Activated CD8-positive, alpha-beta T cell treated with anti-CD3 and anti-CD28 coated beads, Interleukin-2, amount 10 ng/mL, durations not matched to agents 7 days and 5 days (primary cell): ENCODE measurements at regions of chr5 and their contacts with region 1.

Region 1: DNA sequence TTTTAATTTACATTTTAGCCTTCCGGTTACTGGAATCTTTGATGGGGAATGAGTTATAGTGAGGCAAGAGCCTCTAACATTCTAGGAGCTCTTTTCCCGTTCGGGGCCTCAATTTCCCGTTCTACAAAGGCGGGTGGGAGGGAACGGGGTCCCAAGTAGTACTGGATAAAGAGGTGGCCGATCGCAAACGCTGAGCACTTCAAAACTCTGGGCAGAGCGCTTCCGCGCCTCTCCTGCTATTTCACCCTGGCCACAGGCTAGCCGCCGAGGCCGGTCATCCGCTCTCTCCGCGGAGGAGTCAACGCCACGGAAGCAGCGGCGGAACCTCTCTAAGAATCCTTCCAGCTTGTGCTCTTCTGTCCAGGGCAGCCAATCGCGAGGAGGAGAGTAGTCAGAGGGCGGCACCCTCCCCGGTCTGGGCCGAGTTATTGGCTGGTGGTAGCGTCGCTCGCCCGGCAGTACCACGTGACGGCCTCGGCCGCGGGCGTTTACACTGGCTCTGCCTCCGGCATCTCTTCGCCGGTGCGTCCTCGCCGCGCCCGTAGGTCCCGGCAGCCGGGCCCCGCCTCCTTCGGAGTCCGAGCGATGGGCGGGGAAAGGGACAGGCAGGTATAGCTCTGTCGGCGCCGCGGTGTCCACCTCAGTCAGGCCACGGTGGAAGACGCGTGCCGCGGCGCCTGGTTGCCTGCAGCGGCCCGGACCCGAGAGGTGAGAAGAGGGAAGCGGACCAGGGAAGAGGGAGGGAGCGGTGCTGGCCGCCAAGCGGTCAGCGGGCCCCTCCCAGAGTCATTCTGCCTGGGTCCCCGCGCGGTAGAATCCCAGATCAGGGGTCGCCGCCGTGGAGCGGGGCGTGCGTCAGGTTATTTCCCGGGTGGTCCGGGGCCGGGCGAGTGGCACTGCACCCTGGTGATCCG is at the start of gene SLC26A2:
- DNase-seq: peak; percentile 97
- ATAC-seq: peak; percentile 100
- H3K4me3 Mint-ChIP-seq: peak within 1 kb of the TSS; percentile 85
- H3K27ac Mint-ChIP-seq: peak within 1 kb of the TSS; percentile 93
- H3K4me1 Mint-ChIP-seq: peaks cover 35% of the 10 kb centered on the region
- H3K27me3 Mint-ChIP-seq: no peaks in the 10 kb centered on the region
- total RNA-seq, gene SLC26A2: 7.6 to 8.0 TPM

Region 2: GRCh38 chr5:149834246-149834855 is 126.2 kb before region 1 on chr5:
- CTCF ChIA-PET with region 1: interaction called, 107 read pairs
- POLR2A ChIA-PET with region 1: interaction called, 3 read pairs
- DNase-seq: peak; percentile 73
- ATAC-seq: peak; percentile 48
- H3K4me3 Mint-ChIP-seq: no peak overlapping the region
- H3K27ac Mint-ChIP-seq: no peak overlapping the region
- H3K4me1 Mint-ChIP-seq: peaks cover 5% of the 10 kb centered on the region
- H3K27me3 Mint-ChIP-seq: no peaks in the 10 kb centered on the region

Region 3: DNA sequence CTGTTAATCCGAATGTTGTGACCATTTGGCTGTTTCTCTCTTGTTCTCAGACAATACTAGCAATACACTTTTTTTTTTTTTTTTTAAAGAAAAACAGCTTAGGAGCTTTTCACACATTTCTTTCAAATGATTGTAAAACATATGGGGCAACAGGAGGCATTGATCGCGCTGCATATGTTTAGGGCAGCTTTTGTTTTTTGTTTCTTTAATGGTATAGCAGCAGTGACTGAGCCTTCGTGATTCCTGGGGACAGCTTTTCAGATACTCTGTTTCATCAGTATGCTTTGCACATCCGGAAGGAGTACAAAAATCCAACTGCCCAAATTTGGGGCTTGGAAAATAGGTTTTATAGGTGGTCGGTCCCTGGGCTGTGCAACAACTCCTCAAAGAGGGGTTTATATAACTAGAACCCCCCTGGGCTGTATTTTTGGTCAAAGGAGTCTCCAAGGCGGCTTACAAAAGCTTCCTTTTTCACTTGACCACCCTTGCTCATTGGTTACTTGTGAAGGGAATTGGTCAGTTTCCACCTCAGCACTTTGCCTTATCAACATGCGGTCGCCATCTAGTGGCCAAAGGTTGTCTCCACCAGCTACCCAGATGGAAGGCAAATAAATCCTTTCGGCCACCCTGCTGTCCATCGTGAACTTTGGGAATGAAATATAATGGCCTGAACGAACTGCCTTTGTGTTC is 107.7 kb before region 1 on chr5:
- CTCF ChIA-PET with region 1: interaction called, 68 read pairs
- POLR2A ChIA-PET with region 1: no interaction called
- DNase-seq: peak; percentile 59
- ATAC-seq: peak; percentile 73
- H3K4me3 Mint-ChIP-seq: no peak overlapping the region
- H3K27ac Mint-ChIP-seq: no peak overlapping the region
- H3K4me1 Mint-ChIP-seq: no peaks in the 10 kb centered on the region
- H3K27me3 Mint-ChIP-seq: no peaks in the 10 kb centered on the region

Region 4: DNA sequence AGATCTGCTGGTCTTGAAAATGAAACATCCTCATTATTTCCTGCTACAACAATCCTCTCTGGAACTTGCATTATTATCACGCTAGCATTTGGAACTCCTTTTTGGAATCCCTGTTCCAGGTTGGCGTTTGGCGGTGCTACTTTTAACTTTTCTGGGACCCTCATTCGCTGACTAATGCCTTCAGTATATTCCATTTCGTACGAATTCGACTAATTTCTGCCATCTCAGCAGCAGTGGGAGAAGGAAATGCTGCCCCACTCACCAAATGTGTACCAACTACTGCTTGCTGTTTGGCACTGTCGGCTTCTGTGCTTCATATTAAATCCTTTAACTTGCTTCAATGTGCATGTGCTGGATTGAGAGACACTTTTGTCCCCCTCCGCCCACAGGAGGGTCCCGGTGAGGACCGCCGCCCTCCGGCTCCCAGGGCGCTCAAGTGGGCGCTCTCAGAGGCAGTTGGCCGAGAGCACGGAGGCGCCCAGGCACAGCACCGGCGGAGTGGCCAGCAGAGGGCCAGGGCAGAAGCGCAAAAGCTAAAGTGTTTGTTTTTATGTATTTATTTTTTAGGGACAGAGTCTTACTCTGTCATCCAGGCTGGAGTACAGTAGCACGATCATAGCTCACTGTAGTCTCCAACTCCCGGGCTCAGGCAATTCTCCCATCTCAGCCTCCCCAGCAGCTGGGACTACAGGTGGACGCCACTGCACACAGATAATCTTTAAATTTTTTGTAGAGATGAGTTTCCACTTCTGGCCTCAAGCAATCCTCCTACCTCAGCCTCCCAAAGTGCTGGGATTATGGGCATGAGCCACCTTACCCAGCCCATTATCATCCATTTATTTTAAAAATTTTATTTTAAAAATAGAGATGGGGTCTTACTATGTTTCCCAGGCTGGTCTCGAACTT is 27.8 kb before region 1 on chr5:
- CTCF ChIA-PET with region 1: interaction called, 12 read pairs
- POLR2A ChIA-PET with region 1: no interaction called
- DNase-seq: no peak
- ATAC-seq: no peak
- H3K4me3 Mint-ChIP-seq: no peak overlapping the region
- H3K27ac Mint-ChIP-seq: no peak overlapping the region
- H3K4me1 Mint-ChIP-seq: peaks cover 3% of the 10 kb centered on the region
- H3K27me3 Mint-ChIP-seq: peaks cover 46% of the 10 kb centered on the region

Region 5: DNA sequence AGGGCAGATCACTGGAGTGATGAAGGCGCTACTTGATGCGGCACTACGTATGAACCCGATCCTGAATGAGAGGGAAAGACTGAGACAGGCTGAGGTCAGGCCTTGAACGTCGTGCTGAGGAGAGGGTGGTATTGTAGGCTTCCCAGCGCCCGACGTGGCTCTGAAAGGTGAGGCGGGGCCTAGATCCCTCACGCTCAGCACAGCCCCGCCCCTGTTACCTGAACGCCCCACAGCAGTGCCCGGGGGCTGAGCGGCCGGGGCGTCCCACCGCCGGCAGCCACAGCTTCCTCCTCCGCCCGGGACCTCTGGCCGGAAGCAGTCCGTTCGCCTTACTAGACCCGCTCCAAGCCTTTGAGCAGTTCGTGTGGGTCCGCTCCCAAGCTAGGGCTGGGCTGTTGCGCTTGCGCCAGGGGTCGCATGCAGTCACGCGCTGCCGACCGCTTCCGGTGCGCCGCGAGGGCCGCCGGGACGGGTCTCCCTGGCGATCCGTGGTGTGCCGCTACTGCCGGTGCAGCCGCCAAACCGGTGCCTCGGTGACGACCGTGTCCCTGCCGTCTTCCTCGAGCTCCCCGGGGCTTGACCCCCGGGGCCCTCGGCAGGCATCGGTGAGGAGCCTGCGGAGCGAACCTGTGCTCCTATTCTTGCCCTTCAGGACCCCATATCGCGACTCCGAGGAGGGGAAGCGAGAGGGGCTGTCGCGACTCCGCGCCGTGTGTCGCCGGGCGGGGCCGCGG is 39.9 kb after region 1 on chr5 and contains the starts of genes HMGXB3 and TIGD6:
- CTCF ChIA-PET with region 1: interaction called, 13 read pairs
- POLR2A ChIA-PET with region 1: interaction called, 14 read pairs
- DNase-seq: peak; percentile 92
- ATAC-seq: peak; percentile 83
- H3K4me3 Mint-ChIP-seq: peak within 1 kb of the TSS; percentile 94
- H3K27ac Mint-ChIP-seq: peak within 1 kb of the TSS; percentile 96
- H3K4me1 Mint-ChIP-seq: peaks cover 39% of the 10 kb centered on the region
- H3K27me3 Mint-ChIP-seq: no peaks in the 10 kb centered on the region
- total RNA-seq, gene HMGXB3: 36.5 to 37.5 TPM
- total RNA-seq, gene TIGD6: 1.1 to 1.4 TPM

Region 6: DNA sequence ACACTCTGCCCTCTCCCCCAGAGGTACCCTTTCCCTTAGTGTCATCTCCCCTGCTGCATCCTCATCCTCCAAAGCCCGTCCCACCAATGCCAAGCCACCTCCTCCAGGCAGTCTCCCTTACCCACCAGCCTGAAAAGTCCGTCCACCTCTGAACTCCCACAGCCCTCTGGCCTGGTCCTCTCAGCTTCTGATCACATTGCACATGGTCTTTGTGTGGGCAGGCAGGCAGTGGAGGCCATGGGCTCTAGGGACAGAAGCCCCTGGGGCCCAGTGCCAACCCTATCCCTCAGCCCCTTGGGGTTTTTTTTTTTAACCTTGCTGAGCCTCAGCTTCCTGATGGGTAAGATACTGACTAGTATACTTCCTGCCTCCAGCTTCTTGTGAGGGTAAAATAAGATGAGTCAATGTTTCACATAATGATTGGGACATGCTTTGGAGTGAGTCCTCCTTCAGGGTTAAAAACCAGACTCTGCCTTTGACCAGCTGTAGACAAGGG is 106.4 kb after region 1 on chr5:
- CTCF ChIA-PET with region 1: no interaction called
- POLR2A ChIA-PET with region 1: no interaction called
- DNase-seq: no peak
- ATAC-seq: peak; percentile 59
- H3K4me3 Mint-ChIP-seq: no peak overlapping the region
- H3K27ac Mint-ChIP-seq: peak overlapping the region; percentile 67
- H3K4me1 Mint-ChIP-seq: peaks cover 26% of the 10 kb centered on the region
- H3K27me3 Mint-ChIP-seq: peaks cover 12% of the 10 kb centered on the region

Region 7: DNA sequence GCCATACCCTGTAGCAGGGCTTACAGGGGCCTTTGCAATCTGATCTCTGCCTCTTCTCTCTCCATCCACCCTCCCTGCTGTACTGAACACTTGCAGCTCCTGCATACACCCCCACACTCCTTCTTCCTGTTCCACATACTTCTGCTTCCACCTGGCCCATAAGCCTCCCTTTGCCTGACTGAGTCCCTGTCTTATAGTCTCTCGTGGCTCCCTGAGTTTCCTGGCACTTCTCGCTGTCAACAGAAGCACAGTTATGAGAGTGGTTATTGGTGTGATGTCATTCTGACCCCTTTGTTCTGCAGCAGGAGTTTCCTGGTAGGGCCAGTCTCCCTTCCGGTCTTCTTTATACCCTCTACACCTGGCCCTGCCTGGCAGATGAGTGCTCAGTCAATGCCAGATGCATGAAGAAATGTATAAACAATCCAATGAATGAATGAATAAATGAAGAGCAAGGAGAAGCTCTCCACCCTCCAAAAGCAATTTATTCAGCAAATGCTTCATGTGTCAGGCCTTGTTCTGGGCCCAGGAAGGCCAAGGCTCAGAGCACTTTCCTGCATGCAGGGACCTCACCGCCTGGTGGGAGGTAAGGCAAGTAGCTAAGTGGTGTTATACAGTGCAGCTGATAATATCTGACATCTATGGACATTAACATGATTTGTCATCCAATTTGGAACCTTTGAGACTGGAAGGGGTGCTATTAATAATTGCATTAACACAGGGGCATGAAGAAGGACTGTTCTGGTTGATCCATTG is 146.3 kb after region 1 on chr5:
- CTCF ChIA-PET with region 1: no interaction called
- POLR2A ChIA-PET with region 1: no interaction called
- DNase-seq: peak; percentile 16
- ATAC-seq: peak; percentile 38
- H3K4me3 Mint-ChIP-seq: no peak overlapping the region
- H3K27ac Mint-ChIP-seq: no peak overlapping the region
- H3K4me1 Mint-ChIP-seq: peaks cover 5% of the 10 kb centered on the region
- H3K27me3 Mint-ChIP-seq: peaks cover 10% of the 10 kb centered on the region